A673 (cell line): ENCODE measurements at regions of chr1 and their contacts with region 1.

Region 1: DNA sequence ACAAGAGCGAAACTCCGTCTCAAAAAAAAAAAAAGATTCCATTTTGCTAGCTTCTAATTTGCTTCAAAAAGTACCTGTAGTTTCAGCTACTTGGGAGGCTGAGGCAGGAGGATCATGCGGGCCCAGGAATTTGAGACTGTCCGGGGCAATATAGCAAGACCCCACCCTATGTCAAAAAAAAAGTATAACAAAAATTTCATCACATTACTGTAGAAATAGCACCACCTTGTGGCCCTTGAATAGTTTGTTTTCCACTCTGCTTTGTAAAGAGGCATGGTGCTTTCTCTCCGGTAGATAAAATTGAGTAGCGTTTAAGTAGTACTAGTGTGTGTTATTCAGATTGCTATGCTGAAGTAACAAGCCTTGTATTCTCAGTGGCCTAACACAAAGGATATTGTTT is 18.2 kb upstream of the MSTO1 start:
- DNase-seq: peak; percentile 86
- H3K4me3 ChIP-seq: no peak overlapping the region
- H3K27ac ChIP-seq: no peak overlapping the region
- H3K4me1 ChIP-seq: peaks cover 7% of the 10 kb centered on the region
- H3K27me3 ChIP-seq: no peaks in the 10 kb centered on the region
- CTCF ChIP-seq: peak; percentile 62

Region 2: DNA sequence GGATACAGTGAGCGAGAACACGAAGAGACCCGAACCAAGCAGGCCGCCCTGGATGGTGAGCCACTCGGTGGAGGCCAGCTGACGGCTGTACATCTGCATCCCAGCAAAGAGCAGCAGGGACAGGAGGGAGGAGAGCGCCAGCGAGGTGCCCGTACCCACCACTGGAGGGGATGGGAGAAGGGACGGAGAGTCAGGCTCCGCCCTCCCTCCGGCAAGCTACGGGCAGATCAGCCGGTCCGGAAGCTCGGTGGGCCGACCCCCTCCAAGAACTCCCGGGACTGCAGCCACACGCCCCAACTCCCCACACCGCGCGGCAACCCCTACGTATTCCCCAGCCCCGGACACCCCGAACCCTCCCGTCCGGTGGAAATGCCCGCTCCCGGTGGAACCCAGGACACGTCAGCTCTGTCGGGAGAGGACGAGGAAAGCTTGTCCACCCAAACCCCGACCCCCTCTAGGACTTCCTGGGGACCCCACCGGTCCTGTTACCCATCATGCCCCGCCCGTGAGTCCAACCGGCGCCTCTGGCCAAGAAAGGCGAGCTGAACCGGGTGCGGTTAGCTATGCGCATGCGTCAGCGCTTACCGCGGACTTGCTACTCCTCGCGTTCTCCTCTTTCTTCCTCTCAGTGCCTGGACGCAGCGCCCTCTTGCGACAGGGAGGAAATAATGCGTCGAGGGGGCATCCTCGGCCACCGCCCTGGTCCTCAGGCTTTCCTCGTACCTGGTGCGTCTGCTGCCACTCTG is 418.9 kb before region 1 on chr1 and contains the start of gene KRTCAP2:
- CTCF ChIA-PET with region 1: no interaction called
- POLR2A ChIA-PET with region 1: no interaction called
- intact Hi-C with region 1: loop called (anchors 10 kb)
- DNase-seq: peak; percentile 97
- H3K4me3 ChIP-seq: peak within 1 kb of the TSS; percentile 86
- H3K27ac ChIP-seq: peak within 1 kb of the TSS; percentile 90
- H3K4me1 ChIP-seq: peaks cover 24% of the 10 kb centered on the region
- H3K27me3 ChIP-seq: no peaks in the 10 kb centered on the region
- CTCF ChIP-seq: peak; percentile 99
- total RNA-seq, gene KRTCAP2: 162 and 179 TPM in 2 replicates

Region 3: GRCh38 chr1:155208541-155209311 is 383.0 kb before region 1 on chr1 and contains the start of gene MTX1:
- CTCF ChIA-PET with region 1: no interaction called
- POLR2A ChIA-PET with region 1: no interaction called
- intact Hi-C with region 1: loop called (anchors 10 kb)
- DNase-seq: peak; percentile 87
- H3K4me3 ChIP-seq: peak within 1 kb of the TSS; percentile 95
- H3K27ac ChIP-seq: peak within 1 kb of the TSS; percentile 93
- H3K4me1 ChIP-seq: peaks cover 16% of the 10 kb centered on the region
- H3K27me3 ChIP-seq: no peaks in the 10 kb centered on the region
- CTCF ChIP-seq: no peak
- total RNA-seq, gene MTX1: 65.2 and 75.9 TPM in 2 replicates

Region 4: DNA sequence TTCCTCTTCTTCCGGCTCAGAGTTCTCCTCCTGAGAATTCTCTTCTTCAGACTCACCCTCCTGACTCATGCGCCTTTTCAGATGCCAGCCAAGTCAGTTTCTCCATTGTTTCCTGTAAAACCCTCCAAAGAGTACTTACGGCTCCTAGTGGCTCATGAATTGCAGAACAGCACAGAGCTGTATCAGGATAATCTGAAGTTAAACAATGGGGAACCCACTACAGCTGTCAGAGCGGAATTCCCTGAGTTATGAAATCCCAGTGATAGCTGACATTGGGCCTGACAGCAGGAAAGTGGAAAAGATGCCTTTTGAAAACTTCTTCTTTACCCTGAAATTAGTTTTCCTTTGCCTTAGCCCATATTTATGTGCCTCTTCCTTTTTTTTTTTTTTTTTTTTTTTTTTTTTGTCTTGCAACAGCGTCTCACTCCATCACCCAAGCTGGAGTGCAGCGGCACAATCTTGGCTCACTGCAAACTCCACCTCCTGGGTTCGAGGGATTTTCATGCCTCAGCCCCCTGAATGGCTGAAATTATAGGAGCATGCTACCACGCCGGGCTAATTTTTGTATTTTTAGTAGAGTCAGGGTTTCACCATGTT is 56.9 kb after region 1 on chr1:
- CTCF ChIA-PET with region 1: no interaction called
- POLR2A ChIA-PET with region 1: no interaction called
- intact Hi-C with region 1: loop called (anchors 10 kb)
- DNase-seq: peak; percentile 89
- H3K4me3 ChIP-seq: no peak overlapping the region
- H3K27ac ChIP-seq: peak overlapping the region; percentile 52
- H3K4me1 ChIP-seq: peaks cover 28% of the 10 kb centered on the region
- H3K27me3 ChIP-seq: no peaks in the 10 kb centered on the region
- CTCF ChIP-seq: peak; percentile 66